Upper lobe of right lung (tissue), 1 donor: ENCODE measurements at regions of chr4 and their contacts with region 1.

Region 1: GRCh38 chr4:41281038-41281634 is 24.4 kb downstream of the UCHL1 start:
- DNase-seq: no peak
- ATAC-seq: peak; percentile 99
- H3K4me3 ChIP-seq: no peak overlapping the region
- H3K27ac ChIP-seq: no peak overlapping the region
- H3K4me1 ChIP-seq: no peaks in the 10 kb centered on the region
- H3K27me3 ChIP-seq: no peaks in the 10 kb centered on the region
- CTCF ChIP-seq: peak; percentile 90

Region 2: DNA sequence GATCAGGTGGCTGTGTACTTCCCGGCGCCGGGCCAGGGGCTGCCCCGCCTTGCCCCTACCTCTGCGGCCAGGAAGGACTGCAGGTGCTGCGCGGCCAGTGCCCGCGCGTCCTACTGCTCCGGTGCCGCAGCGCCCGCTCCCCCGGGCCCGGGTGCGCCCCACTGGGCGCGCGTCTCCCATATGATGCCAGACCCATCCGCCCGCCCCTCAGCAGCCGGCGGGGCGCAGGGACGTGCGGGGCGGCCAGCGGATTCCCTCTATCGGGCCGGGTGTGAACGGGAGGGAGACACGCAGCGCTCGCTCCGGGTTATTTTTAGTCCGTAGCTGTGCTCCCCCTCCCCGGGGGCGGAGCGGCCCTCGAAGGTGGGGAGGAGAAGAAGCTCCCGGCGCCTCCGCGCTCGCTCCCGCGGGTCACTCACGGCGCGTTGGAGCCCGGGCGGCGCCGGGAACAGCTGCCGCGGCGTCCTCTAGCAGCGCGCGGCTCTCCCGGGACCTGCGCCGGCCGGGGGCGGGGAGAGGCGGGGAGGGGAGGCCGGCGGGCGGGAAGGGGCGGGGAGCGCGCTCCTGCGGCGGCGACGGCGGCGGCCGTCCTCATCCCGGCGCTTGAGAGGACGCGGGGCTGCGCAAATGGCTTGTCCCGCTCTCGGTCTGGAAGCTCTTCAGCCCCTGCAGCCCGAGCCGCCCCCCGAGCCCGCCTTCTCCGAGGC is 79.2 kb after region 1 on chr4:
- intact Hi-C with region 1: no loop called
- DNase-seq: peak; percentile 91
- ATAC-seq: peak; percentile 87
- H3K4me3 ChIP-seq: peak overlapping the region; percentile 77
- H3K27ac ChIP-seq: peak overlapping the region; percentile 86
- H3K4me1 ChIP-seq: peaks cover 18% of the 10 kb centered on the region
- H3K27me3 ChIP-seq: no peaks in the 10 kb centered on the region
- CTCF ChIP-seq: no peak

Region 3: GRCh38 chr4:41661442-41662076 is 380.4 kb after region 1 on chr4:
- intact Hi-C with region 1: loop called (anchors 5 kb)
- DNase-seq: peak; percentile 69
- ATAC-seq: peak; percentile 93
- H3K4me3 ChIP-seq: no peak overlapping the region
- H3K27ac ChIP-seq: no peak overlapping the region
- H3K4me1 ChIP-seq: no peaks in the 10 kb centered on the region
- H3K27me3 ChIP-seq: no peaks in the 10 kb centered on the region
- CTCF ChIP-seq: peak; percentile 99